Heart left ventricle (tissue), 16 donors: ENCODE measurements at regions of chr6 and their contacts with region 1.

Region 1: GRCh38 chr6:157045831-157046454 is 268.8 kb downstream of the ARID1B start:
- DNase-seq: no peak
- ATAC-seq: no peak
- H3K4me3 ChIP-seq: no peak overlapping the region
- H3K27ac ChIP-seq: no peak overlapping the region
- H3K4me1 ChIP-seq: peaks cover 0 to 48% (median 16%) of the 10 kb centered on the region in 12 donors
- H3K27me3 ChIP-seq: no peaks in the 10 kb centered on the region
- CTCF ChIP-seq: peak; percentile 32 to 67 (median 50)
- POLR2A ChIP-seq: no peak

Region 2: DNA sequence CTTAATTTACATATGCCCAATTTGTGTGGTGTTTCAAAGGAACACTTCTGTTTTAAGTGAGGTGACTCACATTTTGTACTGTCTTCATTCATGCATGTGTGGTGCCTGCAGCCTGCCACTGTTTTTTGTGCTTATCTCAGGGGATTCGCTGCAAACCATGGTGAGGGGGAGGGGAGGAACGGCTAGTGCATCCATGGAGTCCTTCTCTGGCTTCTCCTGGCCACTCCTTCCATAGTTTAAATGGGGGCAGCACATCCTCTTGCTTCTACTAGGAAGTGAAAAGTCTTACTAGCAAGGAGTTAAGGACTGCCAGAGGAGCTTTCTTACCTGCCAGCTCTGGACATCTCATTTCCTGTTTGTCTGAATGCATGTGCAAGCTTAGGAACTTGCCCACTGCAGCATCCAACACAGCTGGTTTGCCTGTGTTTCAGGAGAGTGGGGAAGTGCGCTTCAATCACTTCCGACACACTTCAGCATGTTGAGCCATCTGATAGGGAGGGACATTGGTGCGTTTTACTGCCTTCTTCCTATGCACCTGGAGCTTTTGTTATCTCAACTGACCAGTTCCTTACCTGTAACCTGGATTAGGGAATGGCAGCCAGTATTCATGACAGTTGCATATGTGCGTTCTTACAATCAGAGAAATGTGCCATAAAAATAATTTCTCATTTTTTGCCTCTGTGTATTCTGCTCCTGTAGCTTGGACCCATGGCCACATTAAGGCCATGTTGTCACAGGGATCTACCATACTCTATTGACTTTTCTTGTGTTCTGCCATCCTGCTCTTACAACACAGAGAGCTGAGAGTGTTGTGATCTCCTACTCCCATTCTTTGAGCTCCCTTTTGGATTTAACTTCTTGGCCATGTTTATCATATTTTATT is 57.4 kb before region 1 on chr6:
- intact Hi-C with region 1: no loop called
- DNase-seq: no peak
- ATAC-seq: no peak
- H3K4me3 ChIP-seq: no peak overlapping the region
- H3K27ac ChIP-seq: no peak overlapping the region
- H3K4me1 ChIP-seq: peaks cover 0 to 51% (median 31%) of the 10 kb centered on the region in 12 donors
- H3K27me3 ChIP-seq: no peaks in the 10 kb centered on the region
- CTCF ChIP-seq: no peak
- POLR2A ChIP-seq: no peak

Region 3: DNA sequence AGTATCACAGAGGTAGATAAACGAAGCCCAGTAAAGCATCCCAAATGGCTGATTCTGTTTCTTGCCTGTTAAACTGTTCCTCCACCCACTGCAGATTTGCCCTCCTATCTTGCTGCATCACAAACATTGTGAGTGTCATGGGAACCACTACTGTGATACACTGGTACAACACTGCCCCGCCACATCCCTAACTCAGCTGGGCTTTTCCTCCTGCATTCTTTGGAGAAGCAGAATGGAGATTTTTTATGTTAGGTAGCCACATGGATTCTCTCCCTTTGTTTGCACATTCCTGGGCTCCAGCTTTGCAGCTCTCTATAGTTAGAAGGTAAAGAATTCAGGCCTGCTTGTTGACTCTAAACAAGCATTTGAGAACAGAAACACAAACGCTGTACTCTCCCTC is 43.3 kb after region 1 on chr6:
- intact Hi-C with region 1: loop called in 1 of 10 experiments (anchors 5 kb)
- DNase-seq: no peak
- ATAC-seq: no peak
- H3K4me3 ChIP-seq: no peak overlapping the region
- H3K27ac ChIP-seq: no peak overlapping the region
- H3K4me1 ChIP-seq: peaks cover 0 to 56% (median 29%) of the 10 kb centered on the region in 12 donors
- H3K27me3 ChIP-seq: no peaks in the 10 kb centered on the region
- CTCF ChIP-seq: no peak
- POLR2A ChIP-seq: no peak